ENCODE measurements at regions of chr3 and their contacts with region 1.

Region 1: GRCh38 chr3:49665822-49666519 is 8.2 kb upstream of the APEH start:
- DNase-seq: no peak
- ATAC-seq: no peak
- H3K4me3 ChIP-seq: no peak overlapping the region
- H3K27ac ChIP-seq: no peak overlapping the region
- H3K4me1 ChIP-seq: peaks cover 8% of the 10 kb centered on the region; the same call in 1 of the 2 replicates
- H3K27me3 ChIP-seq: no peaks in the 10 kb centered on the region
- CTCF ChIP-seq: no peak

Region 2: GRCh38 chr3:49539659-49540560 is 126.1 kb before region 1 on chr3:
- CTCF ChIA-PET with region 1: interaction called, 30 read pairs
- POLR2A ChIA-PET with region 1: interaction called, 14 read pairs
- in situ Hi-C with region 1: no loop called
- intact Hi-C with region 1: loop called (anchors 2 kb)
- DNase-seq: peak; percentile 39
- ATAC-seq: peak; percentile 98
- H3K4me3 ChIP-seq: peak overlapping the region; percentile 50 to 63
- H3K27ac ChIP-seq: peak overlapping the region; percentile 72
- H3K4me1 ChIP-seq: peaks cover 4% of the 10 kb centered on the region; the same call in 1 of the 2 replicates
- H3K27me3 ChIP-seq: no peaks in the 10 kb centered on the region
- CTCF ChIP-seq: peak; percentile 92

Region 3: GRCh38 chr3:50278868-50279224 is 612.9 kb after region 1 on chr3 and contains the start of gene LSMEM2:
- CTCF ChIA-PET with region 1: no interaction called
- POLR2A ChIA-PET with region 1: no interaction called
- in situ Hi-C with region 1: no loop called
- intact Hi-C with region 1: no loop called
- DNase-seq: no peak
- ATAC-seq: no peak
- H3K4me3 ChIP-seq: no peak within 1 kb of the TSS
- H3K27ac ChIP-seq: no peak within 1 kb of the TSS
- H3K4me1 ChIP-seq: no peaks in the 10 kb centered on the region; the same call in 1 of the 2 replicates
- H3K27me3 ChIP-seq: no peaks in the 10 kb centered on the region
- CTCF ChIP-seq: no peak
- total RNA-seq, gene LSMEM2: not detected

Measured in Panc1 (cell line).